ENCODE measurements at regions of chr10 and their contacts with region 1.

Region 1: GRCh38 chr10:101782811-101783735 is at the start of gene NPM3:
- DNase-seq: peak; percentile 17
- H3K4me3 ChIP-seq: peak within 1 kb of the TSS; percentile 77
- H3K27me3 ChIP-seq: no peaks in the 10 kb centered on the region
- CTCF ChIP-seq: no peak
- polyA plus RNA-seq, gene NPM3: 31.8 and 35.6 TPM in 2 replicates

Region 2: GRCh38 chr10:101587725-101588653 is 195.1 kb before region 1 on chr10 and contains the starts of genes DPCD and POLL:
- CTCF ChIA-PET with region 1: interaction called, 10 read pairs
- POLR2A ChIA-PET with region 1: no interaction called
- DNase-seq: peak; percentile 63
- H3K4me3 ChIP-seq: peak within 1 kb of the TSS; percentile 92
- H3K27me3 ChIP-seq: no peaks in the 10 kb centered on the region
- CTCF ChIP-seq: no peak
- polyA plus RNA-seq, gene DPCD: 46.4 and 51.9 TPM in 2 replicates
- polyA plus RNA-seq, gene POLL: 18.8 and 31.3 TPM in 2 replicates

Region 3: DNA sequence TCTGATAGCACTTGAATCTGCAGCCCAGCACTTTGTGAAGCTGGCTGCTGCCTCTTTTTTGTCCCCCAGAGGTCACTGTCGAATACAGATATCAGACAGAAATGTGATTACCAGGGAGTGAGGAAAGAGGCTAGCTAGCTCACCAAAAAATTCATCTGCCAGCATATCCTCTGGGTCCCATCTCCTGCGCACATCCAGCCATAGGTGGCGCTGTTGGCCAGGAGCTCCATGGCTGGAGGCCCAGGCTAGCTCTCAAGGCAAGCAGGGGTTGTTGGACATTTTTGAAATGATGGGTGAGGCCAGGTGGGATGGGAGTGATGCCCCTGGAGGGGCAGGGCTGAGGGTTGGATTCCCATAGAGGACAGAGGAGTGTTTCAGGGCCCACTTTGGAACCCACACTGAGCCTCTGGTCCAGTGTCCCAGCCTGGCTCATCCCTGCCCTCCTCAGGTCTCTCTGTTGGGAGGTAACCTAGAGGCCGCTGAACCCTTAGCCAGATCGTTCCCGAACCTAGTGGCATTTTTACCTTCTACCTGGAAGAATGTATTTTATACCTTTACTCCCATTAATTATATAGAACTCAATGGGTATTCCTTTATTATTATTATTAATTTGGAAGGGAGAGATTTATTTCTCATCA is 180.2 kb before region 1 on chr10:
- CTCF ChIA-PET with region 1: interaction called, 88 read pairs
- POLR2A ChIA-PET with region 1: no interaction called
- DNase-seq: no peak
- H3K4me3 ChIP-seq: no peak overlapping the region
- H3K27me3 ChIP-seq: no peaks in the 10 kb centered on the region
- CTCF ChIP-seq: peak; percentile 96

Region 4: GRCh38 chr10:101611096-101611905 is 171.8 kb before region 1 on chr10:
- CTCF ChIA-PET with region 1: interaction called, 20 read pairs
- POLR2A ChIA-PET with region 1: no interaction called
- DNase-seq: no peak
- H3K4me3 ChIP-seq: no peak overlapping the region
- H3K27me3 ChIP-seq: no peaks in the 10 kb centered on the region
- CTCF ChIP-seq: no peak

Region 5: GRCh38 chr10:101769541-101770180 is 13.4 kb before region 1 on chr10:
- CTCF ChIA-PET with region 1: interaction called, 20 read pairs
- POLR2A ChIA-PET with region 1: no interaction called
- DNase-seq: no peak
- H3K4me3 ChIP-seq: no peak overlapping the region
- H3K27me3 ChIP-seq: peaks cover 53% of the 10 kb centered on the region
- CTCF ChIP-seq: no peak

Region 6: DNA sequence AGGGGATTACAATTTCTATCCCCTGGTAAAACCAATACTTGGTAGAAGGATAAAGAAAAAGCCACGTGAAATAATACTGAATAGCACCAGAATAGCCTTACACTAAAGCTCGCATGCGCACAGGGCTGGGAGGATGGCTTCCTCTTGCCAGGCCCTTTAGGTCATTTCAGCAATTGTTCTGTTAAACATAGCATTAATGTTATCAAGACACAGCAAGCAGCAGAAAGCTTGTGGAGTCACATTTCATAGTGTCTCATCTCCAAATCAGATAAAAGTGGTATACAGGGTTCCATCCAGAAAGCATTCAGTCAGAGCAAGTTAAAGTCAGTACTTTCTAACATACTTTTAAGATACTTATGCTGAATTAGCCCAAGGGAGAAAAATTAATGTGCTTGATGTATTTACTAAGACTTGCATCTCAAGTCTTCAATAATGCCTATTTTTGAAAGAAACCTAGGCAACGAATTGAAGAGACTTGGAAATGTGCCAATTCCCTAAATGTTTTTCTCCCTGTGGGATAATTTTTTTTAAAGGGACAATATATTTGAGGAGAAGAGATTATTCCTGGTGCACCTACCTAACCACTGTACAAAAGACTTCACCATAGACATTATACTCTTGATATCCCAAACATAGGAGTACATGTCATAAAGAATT is 14.5 kb after region 1 on chr10:
- CTCF ChIA-PET with region 1: interaction called, 21 read pairs
- POLR2A ChIA-PET with region 1: no interaction called
- DNase-seq: no peak
- H3K4me3 ChIP-seq: no peak overlapping the region
- H3K27me3 ChIP-seq: no peaks in the 10 kb centered on the region
- CTCF ChIP-seq: no peak

Region 7: GRCh38 chr10:101818119-101818871 is 35.2 kb after region 1 on chr10 and contains the start of gene OGA:
- CTCF ChIA-PET with region 1: interaction called, 10 read pairs
- POLR2A ChIA-PET with region 1: no interaction called
- DNase-seq: peak; percentile 100
- H3K4me3 ChIP-seq: peak within 1 kb of the TSS; percentile 99
- H3K27me3 ChIP-seq: no peaks in the 10 kb centered on the region
- CTCF ChIP-seq: no peak
- polyA plus RNA-seq, gene OGA: 25.6 and 52.3 TPM in 2 replicates